ENCODE measurements at regions of chr12 and their contacts with region 1.

Region 1: DNA sequence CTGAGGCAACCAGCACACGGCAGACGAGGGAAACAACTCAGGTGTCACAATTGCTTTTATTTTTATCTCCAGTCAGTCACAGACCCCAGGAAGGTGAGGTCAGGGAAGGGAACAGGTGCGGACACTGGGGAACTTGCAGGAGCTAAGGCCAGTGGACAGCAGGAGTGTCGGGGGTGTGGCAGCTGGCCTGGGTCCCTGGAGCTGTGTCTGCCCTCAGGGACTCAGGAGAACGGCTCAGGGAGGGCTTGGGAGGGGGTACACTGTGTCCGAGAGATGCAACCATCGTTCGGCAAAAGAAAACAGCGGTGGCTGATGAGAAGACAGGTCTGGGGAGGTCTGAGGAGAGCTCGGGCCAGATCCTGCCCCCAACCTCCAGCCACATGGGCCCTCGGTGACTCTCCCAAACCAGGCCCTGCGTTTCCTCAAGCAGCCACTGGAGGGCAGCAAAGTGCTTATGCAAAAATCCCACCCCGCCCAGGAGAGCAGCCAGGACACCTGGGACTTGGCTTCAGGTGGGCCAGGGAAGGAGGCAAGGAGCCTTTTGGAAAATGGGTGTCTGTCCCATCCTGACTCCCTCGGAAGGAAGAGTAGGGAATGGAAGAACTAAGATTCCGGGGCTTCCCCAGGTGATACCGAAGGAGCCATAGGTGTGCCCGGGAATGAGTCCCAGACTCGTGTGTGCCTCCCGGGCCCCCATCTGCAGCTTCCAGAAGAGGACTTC is 24.1 kb upstream of the BCDIN3D start:
- DNase-seq: peak; percentile 67 to 82
- H3K4me3 ChIP-seq: no peak overlapping the region
- H3K27ac ChIP-seq: peak overlapping the region; percentile 57; the same call in 1 of the 2 replicates
- H3K4me1 ChIP-seq: peaks cover 30% of the 10 kb centered on the region
- H3K27me3 ChIP-seq: no peaks in the 10 kb centered on the region
- CTCF ChIP-seq: peak; percentile 98

Region 2: DNA sequence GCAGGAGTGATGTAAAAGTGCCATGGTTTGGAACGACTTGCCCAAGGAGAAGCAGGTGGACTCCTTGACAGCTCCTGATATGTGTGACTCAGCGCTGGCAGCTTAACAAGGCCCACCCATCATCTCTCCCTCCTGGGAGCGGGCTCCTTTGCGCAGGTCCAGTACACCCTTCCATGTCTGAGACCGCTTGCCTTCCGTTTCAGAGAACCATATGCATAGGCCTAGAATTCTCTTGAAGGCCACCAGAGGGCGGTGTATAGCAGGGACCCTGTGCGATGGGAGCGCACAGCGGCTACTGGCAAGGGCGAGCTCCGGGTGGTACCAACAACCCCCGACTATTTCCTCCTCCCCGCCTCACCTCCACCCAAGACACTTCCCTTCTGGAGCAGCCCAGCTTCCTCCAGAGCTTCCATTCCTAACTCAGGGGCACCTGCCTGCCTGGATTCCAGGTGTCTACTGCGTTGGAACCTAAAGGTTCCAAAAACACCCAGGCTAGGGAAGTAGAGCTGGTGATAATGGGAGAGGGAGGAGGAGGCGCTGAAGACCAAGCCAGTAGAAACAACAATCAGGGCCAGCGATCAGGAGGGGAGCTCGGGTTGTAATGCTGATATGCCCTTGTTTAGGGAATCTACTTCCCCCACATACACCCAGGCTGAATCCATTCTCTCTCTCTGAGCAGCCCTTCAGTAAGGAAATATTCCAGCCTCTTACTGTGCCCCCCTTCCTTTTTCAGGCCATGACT is 778.7 kb before region 1 on chr12:
- CTCF ChIA-PET with region 1: no interaction called
- POLR2A ChIA-PET with region 1: no interaction called
- intact Hi-C with region 1: no loop called
- DNase-seq: peak; percentile 90 to 92
- H3K4me3 ChIP-seq: peak overlapping the region; percentile 37; the same call in 1 of the 2 replicates
- H3K27ac ChIP-seq: no peak overlapping the region
- H3K4me1 ChIP-seq: peaks cover 25% of the 10 kb centered on the region
- H3K27me3 ChIP-seq: peaks cover 10% of the 10 kb centered on the region
- CTCF ChIP-seq: peak; percentile 86

Region 3: GRCh38 chr12:49664591-49665239 is 202.3 kb before region 1 on chr12:
- CTCF ChIA-PET with region 1: no interaction called
- POLR2A ChIA-PET with region 1: no interaction called
- intact Hi-C with region 1: no loop called
- DNase-seq: no peak
- H3K4me3 ChIP-seq: no peak overlapping the region
- H3K27ac ChIP-seq: no peak overlapping the region
- H3K4me1 ChIP-seq: no peaks in the 10 kb centered on the region
- H3K27me3 ChIP-seq: no peaks in the 10 kb centered on the region
- CTCF ChIP-seq: no peak

Region 4: GRCh38 chr12:49842519-49843352 is 24.3 kb before region 1 on chr12 and contains the start of gene BCDIN3D:
- CTCF ChIA-PET with region 1: no interaction called
- POLR2A ChIA-PET with region 1: no interaction called
- intact Hi-C with region 1: loop called (anchors 2 kb)
- DNase-seq: peak; percentile 89 to 92
- H3K4me3 ChIP-seq: peak within 1 kb of the TSS; percentile 69
- H3K27ac ChIP-seq: peak within 1 kb of the TSS; percentile 77
- H3K4me1 ChIP-seq: peaks cover 21% of the 10 kb centered on the region
- H3K27me3 ChIP-seq: no peaks in the 10 kb centered on the region
- CTCF ChIP-seq: no peak
- total RNA-seq, gene BCDIN3D: 2.5 and 4.7 TPM in 2 replicates

Region 5: DNA sequence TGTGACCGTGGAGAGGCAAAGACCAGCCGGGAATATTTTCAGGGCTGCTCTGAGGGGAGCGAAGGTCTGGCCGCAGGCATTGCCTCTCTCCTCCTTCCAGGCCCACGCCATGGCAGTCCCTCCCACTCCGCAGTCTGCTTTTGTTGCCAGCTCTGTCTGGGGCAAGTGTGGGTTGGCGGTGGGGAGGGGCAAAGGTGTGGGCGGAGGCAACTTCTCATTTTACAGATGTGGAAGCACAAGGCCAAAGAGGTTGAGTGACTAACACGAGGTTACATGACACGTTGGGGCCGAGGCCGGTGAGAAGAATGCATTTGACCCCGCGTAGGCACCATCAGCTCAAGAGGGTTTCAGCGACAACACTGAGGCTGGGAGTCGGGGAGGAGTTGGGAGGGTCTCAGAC is 42.8 kb after region 1 on chr12:
- CTCF ChIA-PET with region 1: no interaction called
- POLR2A ChIA-PET with region 1: no interaction called
- intact Hi-C with region 1: loop called (anchors 5 kb)
- DNase-seq: peak in 1 of 2 experiments; percentile 87
- H3K4me3 ChIP-seq: no peak overlapping the region
- H3K27ac ChIP-seq: no peak overlapping the region
- H3K4me1 ChIP-seq: peaks cover 7% of the 10 kb centered on the region
- H3K27me3 ChIP-seq: no peaks in the 10 kb centered on the region
- CTCF ChIP-seq: no peak

Region 6: DNA sequence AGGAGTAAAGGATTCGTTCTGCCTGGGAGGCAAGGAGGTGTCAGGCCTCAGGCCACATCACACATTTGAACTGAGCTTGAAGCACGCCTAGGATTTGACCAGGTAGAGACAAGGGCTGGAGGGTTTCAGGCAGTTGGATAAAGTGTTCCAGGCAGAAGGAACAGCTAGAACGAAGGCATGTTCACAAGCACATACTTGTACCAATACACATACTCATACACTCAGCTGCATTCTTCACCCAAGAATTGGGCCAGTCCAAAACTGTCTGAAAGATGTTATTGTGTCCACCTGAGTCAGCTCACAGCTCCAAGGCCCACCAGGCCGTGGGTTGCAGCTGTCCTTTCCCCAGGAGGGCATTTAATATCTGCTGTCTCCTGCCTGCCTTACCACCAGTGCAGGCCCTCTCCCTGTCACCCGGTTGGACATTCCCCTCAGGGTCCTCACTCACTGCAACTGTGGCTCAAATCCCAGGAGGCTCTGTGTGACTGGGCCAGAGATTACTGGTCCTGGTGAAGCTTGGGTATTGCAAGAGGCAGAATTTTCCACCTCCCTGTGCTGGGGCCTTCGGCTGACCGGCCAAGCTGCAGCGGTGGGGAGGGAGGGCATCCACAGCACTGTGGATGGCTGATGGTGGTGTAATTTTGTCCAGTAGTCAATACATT is 70.8 kb after region 1 on chr12:
- CTCF ChIA-PET with region 1: no interaction called
- POLR2A ChIA-PET with region 1: no interaction called
- intact Hi-C with region 1: loop called (anchors 2 kb)
- DNase-seq: no peak
- H3K4me3 ChIP-seq: no peak overlapping the region
- H3K27ac ChIP-seq: no peak overlapping the region
- H3K4me1 ChIP-seq: peaks cover 18% of the 10 kb centered on the region
- H3K27me3 ChIP-seq: no peaks in the 10 kb centered on the region
- CTCF ChIP-seq: no peak

Region 7: DNA sequence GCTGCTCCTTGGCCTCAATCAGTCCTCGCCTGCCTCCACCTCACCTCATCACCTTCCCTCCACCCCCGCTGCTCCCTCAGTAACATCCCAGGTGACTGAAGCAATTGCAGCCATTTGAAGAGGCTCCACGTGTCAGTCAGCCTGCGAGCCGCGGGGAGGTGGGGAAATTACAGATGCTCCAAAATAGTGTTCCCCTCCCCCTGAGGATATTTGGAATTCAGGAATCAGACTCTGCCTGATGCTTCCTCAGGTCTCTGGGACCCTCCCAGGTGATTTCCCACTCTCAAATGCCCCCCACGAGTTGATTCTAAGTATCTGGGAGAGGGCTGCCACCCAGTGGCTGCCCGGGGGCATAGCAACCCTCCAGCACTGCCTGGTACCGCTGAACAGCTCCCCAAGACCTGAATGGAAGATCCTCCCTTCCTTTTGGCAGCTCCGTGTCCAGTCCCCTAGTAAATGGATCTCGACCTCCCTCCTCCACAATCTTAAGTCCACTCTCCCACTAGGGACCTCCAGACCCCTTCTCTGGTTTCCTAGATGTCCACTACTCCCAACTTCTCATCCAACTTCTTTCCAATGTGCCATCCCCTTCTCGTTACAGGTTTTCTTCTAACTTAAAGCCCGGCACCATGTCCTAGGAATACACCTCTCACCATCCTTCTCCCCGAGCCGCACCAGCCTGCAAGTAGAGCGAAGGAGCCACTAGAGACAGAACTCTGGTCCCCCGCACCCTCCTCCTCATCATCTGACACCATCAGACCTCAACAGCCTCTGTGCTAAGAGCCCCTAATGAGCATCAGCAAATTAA is 189.0 kb after region 1 on chr12:
- CTCF ChIA-PET with region 1: interaction called, 3 read pairs
- POLR2A ChIA-PET with region 1: interaction called, 5 read pairs
- intact Hi-C with region 1: loop called (anchors 1 kb)
- DNase-seq: peak in 1 of 2 experiments; percentile 37
- H3K4me3 ChIP-seq: no peak overlapping the region
- H3K27ac ChIP-seq: no peak overlapping the region
- H3K4me1 ChIP-seq: peaks cover 5% of the 10 kb centered on the region
- H3K27me3 ChIP-seq: peaks cover 23% of the 10 kb centered on the region
- CTCF ChIP-seq: peak; percentile 93

Region 8: DNA sequence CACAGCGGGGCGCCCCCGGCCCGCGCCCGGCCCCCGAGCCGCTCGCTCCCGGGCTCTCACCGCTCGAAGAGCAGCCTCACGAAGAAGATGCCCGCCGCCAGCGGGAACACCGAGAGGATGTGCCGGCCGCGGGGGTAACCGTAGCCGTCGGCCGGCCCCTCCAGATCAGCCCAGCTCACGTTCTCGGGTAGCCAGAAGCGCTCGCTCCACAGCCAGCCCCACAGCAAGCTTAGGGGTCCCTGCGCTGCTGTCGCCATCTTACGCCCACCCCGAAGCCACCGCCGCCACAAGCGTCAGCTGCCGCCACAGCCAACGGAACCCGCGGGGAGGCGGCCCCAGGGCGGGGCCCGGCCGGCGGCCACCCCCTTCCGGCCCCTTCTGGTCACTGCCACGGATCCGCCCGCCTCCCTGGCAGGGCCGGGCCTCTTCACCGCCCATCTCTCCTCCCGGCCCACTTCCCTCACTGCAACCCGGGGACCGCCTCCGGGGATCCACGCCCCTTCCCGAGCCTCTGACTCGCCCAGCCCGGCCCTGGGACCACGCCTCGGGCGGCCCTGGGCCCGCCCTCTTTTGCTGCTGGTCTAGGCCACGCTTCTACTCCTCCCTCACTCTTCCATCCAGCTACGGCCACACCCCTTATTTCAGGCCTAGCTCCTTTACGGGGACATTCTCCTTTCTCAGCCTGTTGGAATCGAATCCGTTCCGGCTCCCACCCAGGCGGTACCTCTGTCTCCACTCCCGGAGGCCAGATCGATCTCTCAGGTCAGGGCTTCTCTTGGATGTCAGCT is 300.2 kb after region 1 on chr12 and contains the start of gene CERS5:
- CTCF ChIA-PET with region 1: no interaction called
- POLR2A ChIA-PET with region 1: no interaction called
- intact Hi-C with region 1: loop called (anchors 5 kb)
- DNase-seq: peak; percentile 92 to 99
- H3K4me3 ChIP-seq: peak within 1 kb of the TSS; percentile 100
- H3K27ac ChIP-seq: peak within 1 kb of the TSS; percentile 35
- H3K4me1 ChIP-seq: peaks cover 17% of the 10 kb centered on the region; the same call in 1 of the 2 replicates
- H3K27me3 ChIP-seq: no peaks in the 10 kb centered on the region
- CTCF ChIP-seq: peak; percentile 50; the same call in 1 of the 2 replicates
- total RNA-seq, gene CERS5: 33.0 and 41.7 TPM in 2 replicates

Measured in PC-9 (cell line).